Heart right ventricle (tissue), 16 donors: ENCODE measurements at regions of chr1 and their contacts with region 1.

Region 1: DNA sequence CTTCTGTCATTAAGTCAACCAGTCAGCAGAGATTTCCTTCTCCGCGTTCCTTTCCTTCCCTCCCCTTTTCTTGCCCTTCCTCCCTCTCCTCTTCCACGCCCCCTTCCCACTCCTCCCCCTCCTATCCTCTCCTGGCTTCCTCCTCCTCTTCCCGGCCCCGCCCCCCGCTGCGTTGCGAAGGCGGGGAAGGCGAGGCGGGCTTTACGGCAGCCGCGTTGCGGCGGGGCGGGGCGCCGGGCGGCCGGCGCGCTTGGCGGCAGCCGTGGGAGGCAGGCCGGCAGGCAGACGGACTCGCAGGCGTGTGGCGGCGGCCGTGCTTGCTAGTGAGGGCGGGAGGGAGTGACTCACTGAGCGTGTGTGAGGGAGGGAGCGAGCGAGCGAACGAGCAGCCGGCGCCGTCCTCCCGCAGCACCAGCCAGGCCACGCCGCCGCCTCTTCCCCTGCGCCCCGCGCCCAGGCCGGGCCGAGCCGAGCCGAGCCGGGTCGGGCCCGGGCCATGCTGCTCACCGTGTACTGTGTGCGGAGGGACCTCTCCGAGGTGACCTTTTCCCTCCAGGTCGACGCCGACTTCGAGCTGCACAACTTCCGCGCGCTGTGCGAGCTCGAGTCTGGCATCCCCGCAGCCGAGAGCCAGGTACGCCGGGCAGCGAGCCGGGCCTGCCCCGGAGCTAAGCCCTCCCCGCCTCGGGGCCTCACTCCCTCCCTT is at the start of gene DDI2:
- DNase-seq: peak; percentile 96 to 98
- ATAC-seq: peak; percentile 91 to 96 (median 94)
- H3K4me3 ChIP-seq: peak within 1 kb of the TSS; percentile 67 to 98 (median 95)
- H3K27ac ChIP-seq: peak within 1 kb of the TSS; percentile 74 to 97 (median 94)
- H3K4me1 ChIP-seq: peaks cover 9 to 51% (median 45%) of the 10 kb centered on the region in 9 donors
- H3K27me3 ChIP-seq: no peaks in the 10 kb centered on the region
- CTCF ChIP-seq: no peak
- total RNA-seq, gene DDI2: 17.7 to 29.6 (median 24.7) TPM

Region 2: GRCh38 chr1:15526490-15527339 is 90.6 kb before region 1 on chr1 and contains the start of gene DNAJC16:
- intact Hi-C with region 1: loop called in 3 of 10 experiments (anchors 5 to 10 kb)
- DNase-seq: peak; percentile 95 to 100
- ATAC-seq: peak; percentile 63 to 78 (median 74)
- H3K4me3 ChIP-seq: peak within 1 kb of the TSS; percentile 60 to 94 (median 84)
- H3K27ac ChIP-seq: peak within 1 kb of the TSS; percentile 62 to 99 (median 94)
- H3K4me1 ChIP-seq: peaks cover 3 to 49% (median 37%) of the 10 kb centered on the region in 9 donors
- H3K27me3 ChIP-seq: no peaks in the 10 kb centered on the region
- CTCF ChIP-seq: peak in 4 of 9 donors; percentile 11 to 49 (median 43)
- total RNA-seq, gene DNAJC16: 13.7 to 22.8 (median 19.1) TPM

Region 3: DNA sequence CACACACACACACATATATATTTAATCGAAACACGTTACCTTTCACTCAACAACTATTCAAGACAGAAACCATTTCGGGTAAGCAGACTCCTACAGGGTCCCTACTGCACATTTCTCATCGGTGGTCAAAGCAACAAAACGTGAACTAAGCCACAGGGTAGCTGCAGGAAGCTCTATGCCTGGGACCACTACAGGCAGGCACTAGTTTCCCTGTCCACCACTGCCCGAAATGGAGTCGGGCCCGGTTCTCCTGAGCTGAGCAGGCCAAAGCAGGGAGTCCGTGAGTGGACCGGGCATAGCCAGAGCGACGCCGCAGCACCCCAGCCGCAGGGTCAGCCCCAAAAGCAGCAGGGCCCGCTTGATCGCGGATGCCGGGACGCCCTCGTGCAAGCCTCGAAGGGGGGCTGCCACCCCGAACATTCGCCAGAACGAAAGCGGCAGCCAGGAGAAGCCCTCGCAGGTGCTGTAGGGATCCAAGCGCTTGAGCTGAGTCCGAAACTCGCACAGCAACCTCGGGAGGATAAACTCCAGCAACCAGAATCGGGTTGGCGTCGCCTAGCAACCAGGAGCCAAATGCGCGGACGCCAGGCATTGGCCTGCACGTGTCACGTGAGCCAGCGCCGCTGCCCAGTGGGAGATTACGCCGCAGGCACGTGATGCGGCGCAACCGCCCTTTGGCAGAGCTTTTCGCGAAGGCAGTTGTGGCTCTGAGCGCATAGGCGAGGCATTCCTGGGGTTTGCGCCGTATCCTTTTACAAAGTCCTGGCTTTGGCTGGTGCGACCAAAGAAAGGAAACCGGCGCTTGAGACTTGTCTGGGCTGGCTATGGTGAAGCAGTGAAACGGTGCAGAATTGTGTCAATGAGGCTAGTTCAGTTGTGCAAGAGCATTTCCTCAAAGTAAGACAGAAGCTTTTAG is 14.0 kb before region 1 on chr1:
- intact Hi-C with region 1: loop called in 2 of 10 experiments (anchors 1 kb)
- DNase-seq: peak; percentile 96 to 97
- ATAC-seq: peak; percentile 96 to 99 (median 99)
- H3K4me3 ChIP-seq: peak overlapping the region; percentile 68 to 95 (median 75)
- H3K27ac ChIP-seq: peak overlapping the region in 9 of 10 donors; percentile 73 to 89 (median 79)
- H3K4me1 ChIP-seq: peaks cover 2 to 27% (median 18%) of the 10 kb centered on the region in 9 donors
- H3K27me3 ChIP-seq: no peaks in the 10 kb centered on the region
- CTCF ChIP-seq: no peak

Region 4: DNA sequence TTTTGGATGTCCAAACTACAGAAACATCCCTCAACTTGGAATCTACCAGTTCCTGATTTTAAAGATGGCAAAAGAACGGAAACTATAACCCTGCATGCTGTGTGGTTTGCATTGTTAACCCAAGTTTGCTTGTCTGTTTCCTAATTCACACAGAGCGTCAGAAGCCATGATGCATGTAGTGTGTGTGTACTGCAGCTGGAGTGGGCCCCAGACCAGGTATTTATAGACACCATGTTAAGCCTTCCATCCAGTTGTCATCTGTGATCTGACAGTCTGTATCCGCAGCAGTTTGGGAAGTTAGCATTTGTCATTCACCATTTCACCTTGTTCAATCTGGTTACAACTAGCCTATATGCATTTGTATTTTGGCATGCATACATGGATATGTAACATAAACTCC is 39.1 kb after region 1 on chr1:
- intact Hi-C with region 1: loop called in 1 of 10 experiments (anchors 5 kb)
- DNase-seq: no peak
- ATAC-seq: peak in 7 of 8 donors; percentile 58 to 81 (median 72)
- H3K4me3 ChIP-seq: no peak overlapping the region
- H3K27ac ChIP-seq: peak overlapping the region in 4 of 10 donors; percentile 1 to 43 (median 24)
- H3K4me1 ChIP-seq: peaks cover 0 to 16% (median 8%) of the 10 kb centered on the region in 9 donors
- H3K27me3 ChIP-seq: no peaks in the 10 kb centered on the region
- CTCF ChIP-seq: peak in 3 of 9 donors; percentile 16 to 27 (median 23)

Region 5: DNA sequence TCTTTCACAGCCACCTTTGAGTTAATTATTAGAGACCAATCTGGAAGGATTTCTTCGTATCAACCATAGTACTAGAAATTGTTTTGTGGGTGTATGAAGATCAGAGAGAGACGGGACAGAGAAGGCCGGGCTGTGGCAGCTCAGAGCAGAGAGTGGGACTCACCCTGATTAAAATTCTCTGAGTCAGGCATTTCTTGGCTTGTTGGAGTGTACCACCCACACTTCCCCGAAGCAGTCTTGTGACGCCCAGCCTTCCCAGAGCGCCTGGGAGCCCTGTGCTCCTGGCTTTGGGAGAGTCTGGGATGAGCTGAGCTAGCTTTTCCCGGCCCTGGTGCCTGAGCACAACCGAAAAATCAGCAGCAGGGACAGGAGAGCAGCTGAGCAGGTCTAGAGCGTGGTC is 86.2 kb after region 1 on chr1:
- intact Hi-C with region 1: loop called in 1 of 10 experiments (anchors 10 kb)
- DNase-seq: peak; percentile 64 to 83
- ATAC-seq: peak; percentile 86 to 95 (median 93)
- H3K4me3 ChIP-seq: peak overlapping the region in 3 of 10 donors; percentile 0 to 10 (median 0)
- H3K27ac ChIP-seq: peak overlapping the region; percentile 62 to 93 (median 87)
- H3K4me1 ChIP-seq: peaks cover 26 to 88% (median 70%) of the 10 kb centered on the region in 9 donors
- H3K27me3 ChIP-seq: no peaks in the 10 kb centered on the region
- CTCF ChIP-seq: no peak

Region 6: DNA sequence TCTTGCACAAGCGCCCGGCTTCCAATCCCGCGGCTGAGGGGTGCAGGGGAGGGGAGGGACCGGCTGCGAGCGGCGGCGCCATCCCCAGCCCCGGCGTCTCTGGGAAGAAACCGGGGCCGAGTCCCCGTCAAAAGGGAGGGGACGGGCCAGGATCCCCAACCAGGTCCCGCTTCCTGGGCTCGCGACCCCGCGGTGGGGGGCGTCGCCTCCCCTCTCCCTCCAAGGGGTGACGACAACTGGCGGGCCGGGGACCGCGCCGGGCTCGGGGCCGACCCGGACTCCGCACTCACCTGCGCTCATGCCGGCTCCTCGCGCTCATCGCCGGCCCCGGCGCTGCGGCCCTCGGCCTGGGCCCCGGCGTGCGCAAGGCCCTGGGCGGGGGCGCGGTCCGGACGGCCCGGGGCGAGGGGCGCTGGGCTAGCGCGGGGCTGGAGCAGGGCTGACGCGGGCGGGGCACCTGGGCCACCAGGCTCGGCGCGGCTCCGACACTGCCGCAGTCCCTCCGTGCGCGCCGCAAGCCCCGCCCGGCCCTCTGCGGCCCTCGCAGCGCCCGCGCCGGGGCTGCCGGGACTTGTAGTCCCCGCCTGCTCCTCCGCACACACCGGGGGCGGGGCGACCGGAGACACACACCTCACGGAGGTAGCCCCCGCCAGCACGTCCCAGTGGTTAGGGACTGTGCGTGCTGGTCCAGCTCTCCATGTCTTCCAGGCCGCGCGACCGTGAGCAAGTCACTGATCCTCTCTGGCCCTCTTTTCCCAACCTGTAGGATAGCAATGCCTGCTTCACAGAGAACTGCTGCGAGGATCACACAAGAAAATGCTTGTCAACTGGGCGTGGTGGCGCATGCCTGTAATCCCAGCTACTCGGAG is 1394.3 kb after region 1 on chr1 and contains the start of gene ATP13A2:
- intact Hi-C with region 1: loop called in 1 of 10 experiments (anchors 5 kb)
- DNase-seq: peak; percentile 70 to 85
- ATAC-seq: peak; percentile 87 to 98 (median 92)
- H3K4me3 ChIP-seq: peak within 1 kb of the TSS; percentile 64 to 99 (median 92)
- H3K27ac ChIP-seq: peak within 1 kb of the TSS in 9 of 10 donors; percentile 58 to 82 (median 79)
- H3K4me1 ChIP-seq: peaks cover 7 to 51% (median 26%) of the 10 kb centered on the region in 9 donors
- H3K27me3 ChIP-seq: no peaks in the 10 kb centered on the region
- CTCF ChIP-seq: no peak
- total RNA-seq, gene ATP13A2: 7.2 to 20.0 (median 10.6) TPM